H1 (cell line): ENCODE measurements at regions of chr7 and their contacts with region 1.

Region 1: DNA sequence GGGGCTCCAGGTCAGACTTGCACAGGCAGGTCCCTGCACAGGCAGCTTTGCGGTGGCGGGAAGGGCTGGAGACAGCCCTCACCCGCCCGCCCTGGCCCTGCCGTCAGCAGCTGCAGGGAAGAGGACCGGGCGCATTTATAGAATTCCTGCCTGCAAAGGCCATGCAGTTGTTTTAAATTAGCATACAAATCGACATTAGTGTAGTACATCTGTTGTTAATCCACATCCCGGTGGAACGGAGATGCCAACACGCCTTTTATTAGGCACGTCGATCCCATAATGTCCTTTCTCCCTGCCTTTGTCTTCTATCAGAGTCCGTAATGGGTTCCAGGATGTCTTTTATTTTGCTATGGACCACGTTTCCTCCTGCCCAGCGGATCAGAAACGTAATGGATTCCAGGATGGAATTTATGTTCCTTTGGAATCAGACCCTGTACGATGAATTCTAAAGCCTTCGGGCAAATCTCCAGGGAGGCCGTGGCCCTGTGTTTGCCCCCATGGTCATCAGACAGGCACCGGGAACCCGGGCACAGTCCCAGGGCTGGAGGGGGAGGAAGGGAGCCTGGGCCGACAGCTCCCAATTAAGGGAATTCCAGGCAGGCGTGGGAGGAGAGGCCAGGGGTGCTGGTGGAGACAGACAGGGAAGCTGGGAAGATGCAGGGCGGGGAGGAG is 123.9 kb downstream of the COL26A1 start:
- DNase-seq: peak in 1 of 2 experiments; percentile 68
- H3K4me3 ChIP-seq: peak overlapping the region in 1 of 4 experiments; percentile 0; a peak in 1 of 8 replicates
- H3K27ac ChIP-seq: peak overlapping the region; percentile 5; the same call in 1 of the 2 replicates
- H3K4me1 ChIP-seq: peaks cover 9 to 21% (median 14%) of the 10 kb centered on the region in 4 experiments
- H3K27me3 ChIP-seq: 0 out of 7 replicates have a peak, but pooled peaks cover 0 to 2% (median 0%) of the 10 kb centered on the region in 4 experiments
- CTCF ChIP-seq: no peak
- EP300 ChIP-seq: no peak
- POLR2A ChIP-seq: no peak
- RAD21 ChIP-seq: no peak

Region 2: DNA sequence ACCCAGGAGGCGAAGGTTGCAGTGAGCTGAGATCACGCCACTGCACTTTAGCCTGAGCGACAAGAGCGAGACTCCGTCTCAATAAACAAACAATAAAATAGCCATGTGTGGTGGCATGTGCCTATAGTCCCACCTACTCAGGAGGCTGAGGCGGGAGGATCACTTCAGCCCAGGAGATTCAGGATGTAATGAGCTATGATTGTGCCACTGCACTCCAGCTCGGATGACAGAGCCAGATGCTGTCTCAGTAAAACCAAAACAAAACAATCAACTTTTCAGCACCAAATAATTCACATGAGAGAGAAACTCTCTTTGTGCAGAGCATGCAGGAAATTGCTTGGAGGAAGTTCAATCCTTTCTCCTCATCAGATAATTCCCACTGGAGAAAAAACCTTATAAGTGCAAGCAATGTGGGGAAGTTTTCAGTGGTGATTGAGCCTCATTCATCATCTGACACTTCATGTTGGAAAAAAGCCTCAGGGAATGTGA is 228.3 kb before region 1 on chr7:
- CTCF ChIA-PET with region 1: no interaction called
- POLR2A ChIA-PET with region 1: no interaction called
- DNase-seq: no peak
- H3K4me3 ChIP-seq: no peak overlapping the region
- H3K27ac ChIP-seq: no peak overlapping the region
- H3K4me1 ChIP-seq: no peaks in the 10 kb centered on the region
- H3K27me3 ChIP-seq: no peaks in the 10 kb centered on the region; a peak in 1 of 7 replicates
- CTCF ChIP-seq: no peak
- EP300 ChIP-seq: no peak
- POLR2A ChIP-seq: no peak
- RAD21 ChIP-seq: no peak

Region 3: DNA sequence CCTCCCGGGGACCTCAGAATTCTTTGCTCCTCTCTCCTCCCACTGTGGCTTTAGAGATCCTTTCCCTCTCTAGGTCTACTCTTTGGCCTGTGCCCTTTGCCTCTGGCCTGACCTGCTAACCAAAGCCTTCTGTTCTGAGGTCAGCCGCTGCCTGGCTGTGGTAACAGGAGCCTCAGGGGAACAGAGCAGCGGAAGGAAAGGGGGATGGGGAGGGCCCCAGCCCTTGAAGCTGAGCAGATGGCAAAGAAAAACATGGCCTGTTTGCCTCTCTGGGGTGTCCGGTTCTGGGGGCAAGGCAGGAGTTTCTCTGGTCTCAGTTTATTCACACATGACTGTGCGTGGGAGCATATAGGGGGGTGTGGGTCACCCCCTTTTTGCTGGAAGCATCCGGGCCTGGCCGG is 95.7 kb before region 1 on chr7:
- CTCF ChIA-PET with region 1: no interaction called
- POLR2A ChIA-PET with region 1: no interaction called
- DNase-seq: no peak
- H3K4me3 ChIP-seq: no peak overlapping the region
- H3K27ac ChIP-seq: peak overlapping the region; percentile 21; the same call in 1 of the 2 replicates
- H3K4me1 ChIP-seq: peaks cover 11 to 24% (median 17%) of the 10 kb centered on the region in 4 experiments
- H3K27me3 ChIP-seq: no peaks in the 10 kb centered on the region
- CTCF ChIP-seq: no peak
- EP300 ChIP-seq: no peak
- POLR2A ChIP-seq: no peak
- RAD21 ChIP-seq: no peak

Region 4: GRCh38 chr7:101470668-101471487 is 15.7 kb before region 1 on chr7:
- CTCF ChIA-PET with region 1: interaction called, 4 read pairs
- POLR2A ChIA-PET with region 1: interaction called, 29 read pairs
- DNase-seq: no peak
- H3K4me3 ChIP-seq: no peak overlapping the region
- H3K27ac ChIP-seq: no peak overlapping the region
- H3K4me1 ChIP-seq: peaks cover 0 to 11% (median 4%) of the 10 kb centered on the region in 4 experiments; a peak in 4 of 7 replicates
- H3K27me3 ChIP-seq: no peaks in the 10 kb centered on the region
- CTCF ChIP-seq: no peak
- EP300 ChIP-seq: no peak
- POLR2A ChIP-seq: no peak
- RAD21 ChIP-seq: no peak